CD4-positive, alpha-beta memory T cell (primary cell): ENCODE measurements at regions of chr5 and their contacts with region 1.

Region 1: DNA sequence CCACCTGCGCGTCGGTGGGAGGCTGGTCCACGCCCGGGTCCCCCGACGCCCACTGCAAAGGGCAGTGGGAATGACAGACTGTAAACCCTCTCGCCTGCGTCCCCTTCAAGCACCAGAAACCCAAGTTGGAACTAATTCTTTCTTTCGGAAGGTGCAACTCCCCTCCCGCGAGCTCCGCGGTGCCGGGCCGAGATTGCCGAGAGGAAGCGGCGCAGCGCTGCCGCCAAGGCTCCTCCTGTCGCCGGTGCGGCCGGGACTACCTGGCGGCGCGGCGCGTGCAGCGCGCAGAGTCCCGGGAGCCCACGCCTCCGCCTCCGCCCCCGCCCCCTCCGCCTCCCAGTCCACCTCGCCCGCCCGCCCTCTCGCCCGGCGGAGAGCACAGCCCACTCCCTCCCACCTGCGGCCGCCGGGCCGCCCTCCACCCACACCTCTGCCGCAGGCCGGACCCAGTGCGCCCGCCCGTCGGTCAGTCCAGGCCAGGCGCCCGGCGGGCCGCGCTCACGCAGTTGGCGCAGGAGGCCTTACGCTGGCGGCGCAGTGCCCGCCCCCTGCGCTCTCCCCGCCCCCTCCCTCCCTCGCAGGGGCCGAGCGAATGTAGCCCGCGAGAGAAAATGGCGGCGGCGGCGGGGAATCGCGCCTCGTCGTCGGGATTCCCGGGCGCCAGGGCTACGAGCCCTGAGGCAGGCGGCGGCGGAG is at the start of gene MAP3K1:
- DNase-seq: peak; percentile 82 to 91 (median 88)
- H3K4me3 ChIP-seq: peak within 1 kb of the TSS; percentile 78 to 87
- H3K4me3 Mint-ChIP-seq: peak within 1 kb of the TSS; percentile 92 to 97 (median 94)
- H3K27ac ChIP-seq: peak within 1 kb of the TSS; percentile 90
- H3K27ac Mint-ChIP-seq: peak within 1 kb of the TSS; percentile 94 to 99 (median 96)
- H3K4me1 ChIP-seq: peaks cover 37% of the 10 kb centered on the region
- H3K4me1 Mint-ChIP-seq: peaks cover 16 to 47% (median 26%) of the 10 kb centered on the region in 4 donors
- H3K27me3 ChIP-seq: no peaks in the 10 kb centered on the region
- H3K27me3 Mint-ChIP-seq: no peaks in the 10 kb centered on the region
- total RNA-seq, gene MAP3K1: 139 to 146 TPM

Region 2: GRCh38 chr5:56481428-56482357 is 333.4 kb before region 1 on chr5:
- CTCF ChIA-PET with region 1: interaction called, 4 read pairs
- POLR2A ChIA-PET with region 1: interaction called, 65 read pairs
- intact Hi-C with region 1: loop called (anchors 1 kb)
- DNase-seq: peak in 4 of 5 donors; percentile 13 to 39 (median 27)
- H3K4me3 ChIP-seq: peak overlapping the region; percentile 52 to 55
- H3K4me3 Mint-ChIP-seq: peak overlapping the region; percentile 87 to 95 (median 92)
- H3K27ac ChIP-seq: peak overlapping the region; percentile 80
- H3K27ac Mint-ChIP-seq: peak overlapping the region; percentile 83 to 98 (median 95)
- H3K4me1 ChIP-seq: peaks cover 49% of the 10 kb centered on the region
- H3K4me1 Mint-ChIP-seq: peaks cover 30 to 54% (median 42%) of the 10 kb centered on the region in 4 donors
- H3K27me3 ChIP-seq: no peaks in the 10 kb centered on the region
- H3K27me3 Mint-ChIP-seq: no peaks in the 10 kb centered on the region

Region 3: DNA sequence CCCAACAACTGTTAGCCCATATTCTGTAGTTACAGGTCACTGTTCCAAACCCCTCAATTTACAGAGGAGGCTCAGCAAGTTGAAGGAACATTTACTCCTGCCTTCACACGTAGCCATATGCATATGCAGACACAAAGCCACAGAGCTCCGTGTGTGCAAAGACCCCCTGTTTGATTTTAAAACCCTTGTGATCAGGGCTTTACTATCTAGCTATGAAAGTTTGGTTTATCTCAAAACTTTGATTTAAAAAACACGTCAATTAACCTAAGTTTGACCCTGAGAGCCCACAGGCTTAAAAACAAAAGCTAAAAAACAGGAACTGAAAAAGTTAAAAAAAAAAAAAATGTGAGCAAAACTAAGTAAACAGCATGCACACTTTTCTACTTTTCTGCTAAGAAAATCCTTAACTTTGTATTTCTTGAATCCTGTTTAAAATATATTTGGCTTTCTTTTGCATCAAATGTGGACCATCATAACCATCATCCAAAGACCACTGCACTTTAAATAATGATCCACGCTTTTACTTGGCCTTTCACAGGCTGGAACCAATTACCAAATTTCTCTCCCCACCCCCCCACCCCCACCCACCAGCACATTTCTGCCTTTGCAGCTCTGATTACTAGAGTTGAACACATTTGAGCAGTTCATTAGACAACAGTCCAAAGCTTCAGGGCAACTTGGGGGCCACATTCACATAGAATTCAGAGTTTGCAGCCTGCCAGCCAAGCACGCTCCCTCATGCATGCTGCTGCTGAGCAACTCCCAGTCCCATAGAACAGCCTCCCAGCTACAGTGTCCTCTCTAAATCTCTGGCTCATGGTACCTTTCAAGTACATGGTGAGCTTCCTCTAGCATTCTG is 128.5 kb before region 1 on chr5:
- CTCF ChIA-PET with region 1: interaction called, 3 read pairs
- POLR2A ChIA-PET with region 1: interaction called, 72 read pairs
- intact Hi-C with region 1: loop called (anchors 2 kb)
- DNase-seq: peak in 4 of 5 donors; percentile 33 to 48 (median 41)
- H3K4me3 ChIP-seq: peak overlapping the region in 1 of 2 donors; percentile 15
- H3K4me3 Mint-ChIP-seq: peak overlapping the region in 7 of 8 donors; percentile 29 to 72 (median 52)
- H3K27ac ChIP-seq: peak overlapping the region; percentile 31
- H3K27ac Mint-ChIP-seq: peak overlapping the region; percentile 44 to 91 (median 84)
- H3K4me1 ChIP-seq: peaks cover 99% of the 10 kb centered on the region
- H3K4me1 Mint-ChIP-seq: peaks cover 60 to 100% (median 80%) of the 10 kb centered on the region in 4 donors
- H3K27me3 ChIP-seq: no peaks in the 10 kb centered on the region
- H3K27me3 Mint-ChIP-seq: no peaks in the 10 kb centered on the region

Region 4: DNA sequence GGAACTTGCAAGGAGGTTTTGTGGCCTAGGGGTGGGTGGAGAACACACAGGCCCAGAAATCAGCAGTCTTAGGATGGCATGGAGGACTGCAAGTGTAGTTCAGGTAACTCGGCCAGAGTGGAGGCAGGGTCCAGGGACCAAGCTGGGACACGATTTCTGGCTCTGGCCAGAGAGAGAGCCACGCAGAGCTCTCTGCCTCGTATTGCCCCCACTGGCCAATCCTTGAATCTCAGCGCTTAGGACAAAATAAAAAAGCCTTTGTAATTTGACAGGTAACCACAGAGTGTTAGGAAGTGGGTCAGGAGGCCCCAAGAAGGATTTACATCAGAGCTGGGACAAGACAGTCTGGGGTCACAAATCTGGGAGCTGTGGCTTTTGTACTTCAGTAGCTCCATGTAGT is 11.9 kb after region 1 on chr5:
- CTCF ChIA-PET with region 1: interaction called, 5 read pairs
- POLR2A ChIA-PET with region 1: interaction called, 25 read pairs
- intact Hi-C with region 1: loop called (anchors 1 kb)
- DNase-seq: peak in 1 of 5 donors; percentile 40
- H3K4me3 ChIP-seq: no peak overlapping the region
- H3K4me3 Mint-ChIP-seq: peak overlapping the region; percentile 67 to 86 (median 74)
- H3K27ac ChIP-seq: peak overlapping the region; percentile 53
- H3K27ac Mint-ChIP-seq: peak overlapping the region; percentile 86 to 95 (median 88)
- H3K4me1 ChIP-seq: peaks cover 98% of the 10 kb centered on the region
- H3K4me1 Mint-ChIP-seq: peaks cover 75 to 98% (median 88%) of the 10 kb centered on the region in 4 donors
- H3K27me3 ChIP-seq: no peaks in the 10 kb centered on the region
- H3K27me3 Mint-ChIP-seq: no peaks in the 10 kb centered on the region

Region 5: DNA sequence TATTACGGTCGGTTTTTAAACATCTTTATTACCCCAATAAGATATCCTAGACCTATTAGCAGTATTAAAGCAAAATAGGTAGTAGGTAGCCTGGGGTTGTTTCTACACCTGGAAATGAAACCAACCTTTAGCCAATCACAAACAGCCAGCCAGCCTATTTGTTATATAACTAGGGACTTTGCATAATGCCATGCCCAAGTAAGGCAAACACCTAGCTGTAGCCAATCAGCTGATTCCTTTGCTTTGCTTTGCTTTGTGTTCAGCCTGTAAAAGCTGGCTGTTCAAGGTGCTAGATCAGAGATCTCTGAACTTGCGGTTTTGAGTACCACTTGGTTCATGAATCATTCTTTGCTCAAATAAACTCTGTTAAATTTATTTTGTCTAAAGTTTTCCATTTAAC is 47.8 kb after region 1 on chr5:
- CTCF ChIA-PET with region 1: no interaction called
- POLR2A ChIA-PET with region 1: no interaction called
- intact Hi-C with region 1: no loop called
- DNase-seq: peak in 2 of 5 donors; percentile 9 to 18
- H3K4me3 ChIP-seq: no peak overlapping the region
- H3K4me3 Mint-ChIP-seq: no peak overlapping the region
- H3K27ac ChIP-seq: no peak overlapping the region
- H3K27ac Mint-ChIP-seq: peak overlapping the region in 1 of 7 donors; percentile 20
- H3K4me1 ChIP-seq: peaks cover 9% of the 10 kb centered on the region
- H3K4me1 Mint-ChIP-seq: peaks cover 13 to 32% (median 23%) of the 10 kb centered on the region in 4 donors
- H3K27me3 ChIP-seq: no peaks in the 10 kb centered on the region
- H3K27me3 Mint-ChIP-seq: no peaks in the 10 kb centered on the region

Region 6: DNA sequence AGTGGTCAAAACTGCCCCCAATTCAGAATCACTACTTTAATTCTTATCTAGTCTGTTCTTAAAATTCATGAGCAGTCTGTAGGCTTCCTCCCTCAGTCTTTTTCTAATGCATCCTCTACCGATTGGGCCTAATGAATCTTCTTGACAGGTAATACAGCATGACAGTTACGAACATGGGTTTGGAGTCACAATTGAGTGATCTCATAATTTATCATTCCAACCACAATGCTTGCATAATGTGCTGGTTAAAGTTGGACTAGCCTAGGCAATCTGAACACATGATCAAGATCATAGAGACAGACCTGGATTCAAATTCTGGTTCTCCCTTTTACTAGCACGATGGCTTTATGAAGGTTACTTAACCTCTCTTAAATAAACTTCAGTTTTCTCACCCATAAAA is 61.2 kb after region 1 on chr5:
- CTCF ChIA-PET with region 1: no interaction called
- POLR2A ChIA-PET with region 1: interaction called, 5 read pairs
- intact Hi-C with region 1: loop called (anchors 1 kb)
- DNase-seq: no peak
- H3K4me3 ChIP-seq: no peak overlapping the region
- H3K4me3 Mint-ChIP-seq: no peak overlapping the region
- H3K27ac ChIP-seq: no peak overlapping the region
- H3K27ac Mint-ChIP-seq: peak overlapping the region in 2 of 7 donors; percentile 0 to 43
- H3K4me1 ChIP-seq: peaks cover 21% of the 10 kb centered on the region
- H3K4me1 Mint-ChIP-seq: peaks cover 28 to 45% (median 30%) of the 10 kb centered on the region in 4 donors
- H3K27me3 ChIP-seq: no peaks in the 10 kb centered on the region
- H3K27me3 Mint-ChIP-seq: no peaks in the 10 kb centered on the region